Spleen (tissue), 13 donors: ENCODE measurements at regions of chr9 and their contacts with region 1.

Region 1: GRCh38 chr9:89000973-89001916 is 10.0 kb downstream of the S1PR3 start:
- DNase-seq: peak; percentile 91
- H3K4me3 ChIP-seq: peak overlapping the region in 1 of 8 donors; percentile 2
- H3K27ac ChIP-seq: peak overlapping the region in 2 of 8 donors; percentile 29 to 46
- H3K4me1 ChIP-seq: peaks cover 5 to 46% (median 32%) of the 10 kb centered on the region in 6 donors
- H3K27me3 ChIP-seq: peaks cover 0 to 13% (median 0%) of the 10 kb centered on the region in 7 donors
- CTCF ChIP-seq: peak; percentile 66 to 85 (median 74)
- POLR2A ChIP-seq: no peak

Region 2: DNA sequence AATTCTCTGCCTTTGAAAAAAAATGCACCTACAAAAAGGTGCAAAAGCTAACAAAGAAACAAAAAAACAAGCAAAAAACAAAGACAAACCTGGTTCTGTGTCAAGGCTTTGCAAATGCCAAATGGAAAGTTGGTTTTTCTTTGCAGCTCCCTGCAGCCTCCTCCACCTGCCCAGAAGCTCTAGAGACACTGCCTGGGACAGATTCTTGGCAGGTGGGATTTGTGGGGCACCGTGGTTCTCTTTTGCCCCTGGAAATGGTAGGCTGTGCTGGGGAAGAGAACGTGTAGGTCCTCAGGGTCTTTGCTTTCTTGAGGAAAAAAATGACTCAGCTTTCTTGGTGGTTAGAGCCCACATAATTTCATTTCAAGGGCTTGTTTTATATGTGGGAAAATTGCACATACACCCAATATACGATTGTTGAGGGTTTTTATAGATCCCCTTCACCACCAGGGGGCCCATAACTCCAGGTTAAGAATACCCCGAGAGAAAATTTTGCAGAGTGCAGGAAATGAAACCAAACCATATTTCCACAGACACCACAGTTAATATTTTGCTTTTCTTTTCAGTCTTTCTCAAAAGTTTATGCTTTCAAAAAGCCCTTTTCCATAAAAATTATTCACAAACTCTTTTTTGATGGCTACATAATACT is 407.6 kb before region 1 on chr9:
- intact Hi-C with region 1: loop called (anchors 5 kb)
- DNase-seq: no peak
- H3K4me3 ChIP-seq: no peak overlapping the region
- H3K27ac ChIP-seq: no peak overlapping the region
- H3K4me1 ChIP-seq: peaks cover 0 to 16% (median 2%) of the 10 kb centered on the region in 6 donors
- H3K27me3 ChIP-seq: peaks cover 0 to 8% (median 0%) of the 10 kb centered on the region in 7 donors
- CTCF ChIP-seq: peak; percentile 22 to 69 (median 57)
- POLR2A ChIP-seq: no peak

Region 3: GRCh38 chr9:88722753-88723152 is 278.5 kb before region 1 on chr9:
- intact Hi-C with region 1: loop called (anchors 10 kb)
- DNase-seq: no peak
- H3K4me3 ChIP-seq: no peak overlapping the region
- H3K27ac ChIP-seq: no peak overlapping the region
- H3K4me1 ChIP-seq: no peaks in the 10 kb centered on the region
- H3K27me3 ChIP-seq: peaks cover 0 to 8% (median 0%) of the 10 kb centered on the region in 7 donors
- CTCF ChIP-seq: peak in 5 of 11 experiments; percentile 18 to 44 (median 21)
- POLR2A ChIP-seq: no peak

Region 4: GRCh38 chr9:88949425-88949824 is 51.8 kb before region 1 on chr9:
- intact Hi-C with region 1: no loop called
- DNase-seq: no peak
- H3K4me3 ChIP-seq: no peak overlapping the region
- H3K27ac ChIP-seq: no peak overlapping the region
- H3K4me1 ChIP-seq: peaks cover 0 to 19% (median 7%) of the 10 kb centered on the region in 6 donors
- H3K27me3 ChIP-seq: no peaks in the 10 kb centered on the region
- CTCF ChIP-seq: no peak
- POLR2A ChIP-seq: no peak